Activated B cell treated with CpG ODN at 0.5 μM for 24 hours (primary cell): ENCODE measurements at regions of chr15 and their contacts with region 1.

Region 1: DNA sequence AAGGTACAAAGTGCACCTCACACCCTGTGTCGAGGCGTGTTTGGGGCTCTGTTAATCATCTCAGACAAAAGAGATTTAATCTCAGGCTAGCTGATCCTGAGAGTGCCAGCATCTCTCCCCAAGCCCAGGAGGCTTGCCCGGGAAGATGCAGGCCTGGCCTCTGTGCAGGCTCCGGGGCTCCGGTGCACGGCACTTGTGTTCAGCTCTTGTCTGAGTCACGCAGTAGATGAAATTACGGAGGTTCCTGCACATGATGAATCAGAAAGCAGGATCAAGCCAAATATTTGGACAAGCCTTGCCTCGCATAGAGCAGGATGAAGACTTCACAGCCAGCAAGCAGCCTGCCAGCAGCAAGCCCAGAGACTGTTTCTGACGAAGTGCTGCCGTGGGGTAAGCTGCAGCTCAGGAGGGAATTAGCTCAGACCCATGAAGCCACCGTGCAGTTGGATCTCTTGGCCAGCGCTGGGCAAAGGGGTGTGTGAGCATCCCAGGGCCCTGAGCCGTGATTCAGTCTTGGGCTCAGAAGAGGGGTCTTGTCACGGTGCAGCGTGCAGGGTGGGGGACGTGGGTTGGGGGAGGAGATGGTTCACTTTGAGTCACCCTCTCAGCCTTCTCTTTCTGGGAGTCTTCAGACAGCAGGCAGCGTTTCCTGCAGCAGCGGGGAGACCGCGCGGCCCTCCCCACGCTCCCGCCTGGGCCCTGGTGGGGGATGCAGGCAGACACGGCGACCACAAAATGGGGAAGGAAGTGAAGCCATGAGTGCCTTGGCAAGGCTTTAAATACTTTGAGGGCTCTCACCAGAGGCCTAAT is 89.2 kb upstream of the MEF2A start:
- DNase-seq: peak; percentile 60
- ATAC-seq: peak; percentile 84
- H3K4me3 Mint-ChIP-seq: peak overlapping the region; percentile 11
- H3K27ac Mint-ChIP-seq: peak overlapping the region; percentile 31
- H3K4me1 Mint-ChIP-seq: peaks cover 52% of the 10 kb centered on the region
- H3K27me3 Mint-ChIP-seq: no peaks in the 10 kb centered on the region
- CTCF ChIP-seq: no peak

Region 2: DNA sequence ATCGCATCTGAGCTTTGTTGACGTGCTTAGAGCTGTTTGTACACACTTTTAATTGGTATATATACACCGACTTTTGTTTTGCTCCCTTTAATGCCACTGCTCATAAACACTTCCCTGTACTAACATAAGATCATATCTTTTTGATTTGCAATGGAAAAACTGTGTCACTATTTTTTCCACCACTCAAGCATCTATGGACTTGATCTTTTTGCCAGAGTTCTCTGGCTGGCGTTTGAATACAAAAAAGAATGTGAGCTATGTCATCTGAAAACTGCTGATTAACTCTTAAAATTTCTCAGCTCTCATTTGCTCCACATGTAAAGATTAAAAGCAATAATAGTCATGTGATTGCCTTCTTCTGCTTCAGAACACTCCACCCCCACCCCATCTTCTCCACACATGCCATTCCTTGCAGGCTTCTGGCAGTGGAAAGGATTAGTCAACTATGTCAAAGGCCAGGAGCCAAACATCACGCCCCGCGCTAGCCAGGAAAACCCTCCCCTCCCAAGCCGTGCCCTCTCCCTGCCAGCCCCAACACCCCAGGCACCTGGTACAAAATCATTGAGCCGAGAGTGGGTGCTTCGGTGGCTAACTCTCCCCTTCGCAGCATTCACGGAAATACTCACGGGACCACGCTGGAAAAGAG is 34.2 kb before region 1 on chr15:
- CTCF ChIA-PET with region 1: no interaction called
- POLR2A ChIA-PET with region 1: no interaction called
- intact Hi-C with region 1: loop called (anchors 5 kb)
- DNase-seq: peak; percentile 14
- ATAC-seq: peak; percentile 64
- H3K4me3 Mint-ChIP-seq: peak overlapping the region; percentile 53
- H3K27ac Mint-ChIP-seq: peak overlapping the region; percentile 52
- H3K4me1 Mint-ChIP-seq: peaks cover 37% of the 10 kb centered on the region
- H3K27me3 Mint-ChIP-seq: no peaks in the 10 kb centered on the region
- CTCF ChIP-seq: no peak

Region 3: DNA sequence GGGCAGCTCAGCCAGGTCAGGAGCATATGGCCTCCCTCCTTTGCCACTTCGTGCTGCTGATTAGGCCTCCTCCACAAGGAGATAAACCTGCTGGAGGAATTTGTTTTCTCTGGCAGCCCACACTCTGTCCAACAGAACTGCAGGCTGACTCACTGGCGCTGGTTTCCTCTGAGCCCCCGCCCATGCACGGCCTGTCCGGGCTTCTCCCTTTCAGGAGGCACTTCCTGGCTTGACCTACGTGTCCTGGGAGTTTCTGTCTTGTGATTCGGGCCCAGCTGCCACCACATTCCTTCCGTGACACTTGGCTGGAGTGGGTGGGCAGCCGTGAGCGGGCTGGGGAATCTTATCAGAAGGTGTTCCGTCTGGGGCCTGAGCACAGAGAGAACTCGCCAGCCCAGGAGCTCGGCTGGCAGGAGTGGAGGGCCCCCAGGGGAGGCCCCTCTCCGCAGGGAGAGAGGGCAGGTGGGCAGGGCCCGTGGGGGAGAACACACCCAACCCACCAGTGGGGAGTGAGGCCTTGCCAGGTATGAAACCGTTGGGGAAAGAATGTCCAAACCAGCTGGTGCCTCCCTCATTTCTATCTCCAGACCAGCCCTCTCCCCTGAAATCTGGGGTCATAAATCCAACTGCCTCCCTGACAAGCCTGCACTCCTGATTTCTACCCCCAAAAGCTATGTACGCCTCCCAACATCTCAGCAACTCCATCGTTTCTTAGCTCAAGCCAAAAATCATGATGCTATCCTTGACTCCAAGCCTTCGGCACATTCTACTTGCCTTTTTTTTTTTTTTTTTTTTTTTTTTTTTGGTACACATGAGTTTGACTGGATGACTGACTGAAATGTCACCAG is 21.5 kb before region 1 on chr15:
- CTCF ChIA-PET with region 1: no interaction called
- POLR2A ChIA-PET with region 1: interaction called, 3 read pairs
- intact Hi-C with region 1: loop called (anchors 2 kb)
- DNase-seq: no peak
- ATAC-seq: no peak
- H3K4me3 Mint-ChIP-seq: no peak overlapping the region
- H3K27ac Mint-ChIP-seq: no peak overlapping the region
- H3K4me1 Mint-ChIP-seq: peaks cover 40% of the 10 kb centered on the region
- H3K27me3 Mint-ChIP-seq: no peaks in the 10 kb centered on the region
- CTCF ChIP-seq: no peak

Region 4: GRCh38 chr15:99486371-99487336 is 10.0 kb after region 1 on chr15:
- CTCF ChIA-PET with region 1: interaction called, 4 read pairs
- POLR2A ChIA-PET with region 1: interaction called, 7 read pairs
- intact Hi-C with region 1: loop called (anchors 2 kb)
- DNase-seq: no peak
- ATAC-seq: peak; percentile 75
- H3K4me3 Mint-ChIP-seq: peak overlapping the region; percentile 77
- H3K27ac Mint-ChIP-seq: no peak overlapping the region
- H3K4me1 Mint-ChIP-seq: peaks cover 25% of the 10 kb centered on the region
- H3K27me3 Mint-ChIP-seq: no peaks in the 10 kb centered on the region
- CTCF ChIP-seq: no peak